AG04449 (cell line): ENCODE measurements at regions of chr4 and their contacts with region 1.

Region 1: DNA sequence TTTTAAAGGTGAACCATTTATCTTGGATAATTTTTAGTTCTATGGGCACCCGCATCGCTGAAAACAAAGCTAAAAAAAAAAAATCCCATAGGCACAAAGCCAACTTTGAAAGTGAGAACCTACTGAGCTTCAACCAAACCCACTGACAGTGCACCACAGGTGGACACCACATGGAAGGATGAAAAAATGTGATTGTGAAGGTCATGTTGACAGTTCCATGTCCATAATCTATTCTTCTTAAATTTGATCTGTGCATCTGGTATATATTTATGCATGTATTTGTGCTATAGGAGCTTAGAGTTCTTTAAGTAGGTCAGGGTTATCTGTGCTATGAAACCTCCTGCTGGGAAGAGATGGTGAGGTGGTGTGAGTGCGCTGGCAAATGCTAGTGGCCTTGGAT is 374.3 kb downstream of the SPRY1 start:
- DNase-seq: no peak
- H3K4me3 ChIP-seq: no peak overlapping the region
- CTCF ChIP-seq: no peak

Region 2: DNA sequence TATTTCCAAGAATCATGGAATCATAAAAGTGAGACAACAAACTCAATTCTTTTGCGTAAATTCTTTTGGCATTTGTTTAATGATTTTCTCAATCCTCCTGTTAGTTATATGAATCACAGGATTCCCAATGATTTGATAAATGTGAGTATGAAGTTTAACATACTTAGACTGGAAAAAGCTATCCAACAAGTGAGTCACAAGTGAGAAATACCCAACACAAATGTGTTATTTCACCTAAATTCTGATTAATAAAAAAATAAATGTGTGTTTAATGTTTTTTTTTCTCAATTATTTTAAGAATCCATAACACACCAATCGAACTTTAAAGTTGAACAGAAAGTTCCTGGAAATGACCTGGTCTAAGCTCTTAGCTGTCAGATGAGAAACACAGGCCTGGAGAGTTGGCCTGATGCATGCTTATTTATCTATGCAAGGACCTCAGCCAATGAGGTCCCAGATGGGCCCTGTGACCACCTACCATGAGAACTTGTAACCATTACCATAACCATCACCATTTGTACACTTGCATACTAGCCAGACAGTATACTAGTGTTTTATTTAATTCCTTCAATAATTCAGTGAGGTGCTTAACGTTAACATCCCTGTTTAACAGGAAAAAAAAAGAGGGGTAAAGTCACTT is 12.4 kb after region 1 on chr4:
- CTCF ChIA-PET with region 1: interaction called, 22 read pairs
- POLR2A ChIA-PET with region 1: no interaction called
- DNase-seq: no peak
- H3K4me3 ChIP-seq: no peak overlapping the region
- CTCF ChIP-seq: no peak

Region 3: DNA sequence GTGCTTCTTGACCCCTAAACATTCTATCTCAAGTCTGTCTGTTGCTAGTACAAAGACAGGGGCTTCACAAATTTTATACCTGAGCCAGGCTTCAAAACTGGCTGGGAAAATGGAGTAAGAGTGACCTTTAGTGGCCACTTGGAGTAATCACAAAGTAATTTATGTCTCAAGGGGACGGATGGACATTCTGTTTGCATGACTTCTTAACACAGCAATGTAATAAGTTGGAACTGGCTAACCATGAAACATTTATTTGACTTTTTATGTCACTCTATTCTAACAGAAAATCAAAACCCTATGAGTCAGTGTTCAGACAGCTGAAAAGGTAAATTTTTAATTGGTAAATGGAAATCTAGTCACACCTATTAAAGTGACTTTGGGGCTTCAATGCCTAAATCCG is 341.0 kb after region 1 on chr4:
- CTCF ChIA-PET with region 1: interaction called, 36 read pairs
- POLR2A ChIA-PET with region 1: no interaction called
- DNase-seq: peak; percentile 44
- H3K4me3 ChIP-seq: no peak overlapping the region
- CTCF ChIP-seq: peak; percentile 34

Region 4: GRCh38 chr4:124144238-124144654 is 373.4 kb after region 1 on chr4:
- CTCF ChIA-PET with region 1: no interaction called
- POLR2A ChIA-PET with region 1: no interaction called
- DNase-seq: no peak
- H3K4me3 ChIP-seq: no peak overlapping the region
- CTCF ChIP-seq: no peak